ENCODE measurements at regions of chr14 and their contacts with region 1.

Region 1: GRCh38 chr14:68979021-68979782 is at the start of gene ACTN1:
- DNase-seq: peak; percentile 98
- H3K4me3 ChIP-seq: peak within 1 kb of the TSS; percentile 68 to 92 (median 79)
- H3K27ac ChIP-seq: peak within 1 kb of the TSS; percentile 87
- H3K4me1 ChIP-seq: peaks cover 52% of the 10 kb centered on the region
- H3K27me3 ChIP-seq: no peaks in the 10 kb centered on the region
- CTCF ChIP-seq: no peak
- POLR2A ChIP-seq: peak; percentile 88
- total RNA-seq, gene ACTN1: 442 and 443 TPM in 2 replicates

Region 2: GRCh38 chr14:68939893-68940613 is 39.1 kb before region 1 on chr14:
- CTCF ChIA-PET with region 1: interaction called, 5 read pairs
- POLR2A ChIA-PET with region 1: interaction called, 10 read pairs
- dilution Hi-C with region 1: no loop called
- intact Hi-C with region 1: loop called (anchors 1 kb)
- DNase-seq: peak; percentile 98
- H3K4me3 ChIP-seq: no peak overlapping the region
- H3K27ac ChIP-seq: peak overlapping the region; percentile 88
- H3K4me1 ChIP-seq: peaks cover 61% of the 10 kb centered on the region
- H3K27me3 ChIP-seq: no peaks in the 10 kb centered on the region
- CTCF ChIP-seq: no peak
- POLR2A ChIP-seq: peak; percentile 51

Region 3: GRCh38 chr14:68958553-68958952 is 20.6 kb before region 1 on chr14:
- CTCF ChIA-PET with region 1: interaction called, 11 read pairs
- POLR2A ChIA-PET with region 1: interaction called, 5 read pairs
- dilution Hi-C with region 1: no loop called
- intact Hi-C with region 1: no loop called
- DNase-seq: peak; percentile 89
- H3K4me3 ChIP-seq: no peak overlapping the region
- H3K27ac ChIP-seq: peak overlapping the region; percentile 56
- H3K4me1 ChIP-seq: peaks cover 62% of the 10 kb centered on the region
- H3K27me3 ChIP-seq: no peaks in the 10 kb centered on the region
- CTCF ChIP-seq: no peak
- POLR2A ChIP-seq: no peak

Region 4: DNA sequence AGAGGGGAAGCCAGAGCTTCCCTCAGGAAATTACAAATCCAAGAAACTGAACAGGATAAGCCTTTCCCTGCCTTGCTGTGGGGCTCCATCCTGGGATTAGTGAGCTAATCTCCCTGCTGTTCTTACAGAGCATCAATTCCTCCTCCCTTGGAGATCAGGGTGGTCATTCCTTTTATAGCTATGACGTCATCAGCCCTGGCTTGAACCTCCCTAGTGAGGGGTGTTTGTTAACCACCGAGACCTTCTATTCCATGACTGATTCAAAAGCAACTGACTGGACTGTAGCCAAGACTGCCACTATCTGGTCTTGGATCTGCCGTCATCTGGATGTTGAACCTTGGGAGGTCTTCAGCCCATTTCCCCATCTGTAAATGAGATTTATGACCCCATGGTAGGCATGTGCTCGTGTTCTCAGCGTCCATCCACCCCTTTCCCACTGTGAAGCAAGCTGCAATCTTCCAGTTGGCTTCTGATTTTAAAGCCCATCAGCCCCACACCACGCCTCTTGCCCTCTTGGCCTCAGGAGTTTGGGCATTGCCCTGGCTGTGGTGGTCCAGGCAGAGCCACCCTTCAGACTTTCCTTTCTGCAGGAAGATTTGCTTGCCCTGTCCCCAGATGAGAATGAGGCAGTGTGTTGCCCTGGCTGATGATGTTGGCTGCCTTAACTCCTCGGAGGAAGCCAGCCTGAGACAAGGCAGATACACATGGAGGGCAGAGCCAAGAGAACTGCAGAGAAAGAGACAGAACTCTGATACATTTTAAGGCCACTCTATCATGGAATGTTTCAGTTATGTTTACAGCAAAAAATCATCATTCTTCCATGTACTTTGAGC is 59.5 kb after region 1 on chr14:
- CTCF ChIA-PET with region 1: interaction called, 16 read pairs
- POLR2A ChIA-PET with region 1: interaction called, 14 read pairs
- dilution Hi-C with region 1: no loop called
- intact Hi-C with region 1: loop called (anchors 1 kb)
- DNase-seq: peak; percentile 98
- H3K4me3 ChIP-seq: no peak overlapping the region
- H3K27ac ChIP-seq: peak overlapping the region; percentile 93
- H3K4me1 ChIP-seq: peaks cover 60% of the 10 kb centered on the region
- H3K27me3 ChIP-seq: no peaks in the 10 kb centered on the region
- CTCF ChIP-seq: no peak
- POLR2A ChIP-seq: no peak

Region 5: GRCh38 chr14:69055999-69056788 is 77.0 kb after region 1 on chr14:
- CTCF ChIA-PET with region 1: interaction called, 10 read pairs
- POLR2A ChIA-PET with region 1: no interaction called
- dilution Hi-C with region 1: no loop called
- intact Hi-C with region 1: loop called (anchors 1 kb)
- DNase-seq: peak; percentile 53
- H3K4me3 ChIP-seq: no peak overlapping the region
- H3K27ac ChIP-seq: peak overlapping the region; percentile 83
- H3K4me1 ChIP-seq: peaks cover 57% of the 10 kb centered on the region
- H3K27me3 ChIP-seq: no peaks in the 10 kb centered on the region
- CTCF ChIP-seq: peak in 1 of 2 donors; percentile 6
- POLR2A ChIP-seq: no peak

Region 6: DNA sequence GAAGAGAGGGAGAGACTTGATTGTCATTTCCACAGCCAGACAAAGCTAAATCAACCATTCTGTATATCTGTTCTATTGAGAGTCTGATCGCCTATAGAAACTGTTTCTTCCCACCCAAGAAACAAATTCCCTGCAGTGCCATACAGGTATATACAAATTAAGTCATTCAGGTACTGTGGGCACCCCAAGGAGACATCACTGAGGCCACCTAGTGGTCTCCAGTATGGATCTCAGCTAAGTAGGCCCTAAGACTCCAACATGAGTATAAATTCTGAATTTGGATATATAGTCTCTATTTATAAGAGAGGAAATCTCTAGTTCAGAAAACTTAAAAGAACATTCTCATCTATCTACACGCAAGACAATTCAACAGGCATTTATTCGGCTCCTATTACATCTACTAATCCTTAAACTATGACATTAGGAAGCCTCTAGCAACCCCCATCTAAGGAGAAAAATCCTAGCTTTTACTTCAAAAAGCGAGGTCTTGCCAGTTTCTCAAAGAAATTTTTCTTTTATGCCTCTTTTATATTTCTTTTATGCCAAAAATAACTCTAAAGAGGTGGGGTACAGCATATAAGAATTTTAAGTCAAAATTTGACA is 111.1 kb after region 1 on chr14:
- CTCF ChIA-PET with region 1: interaction called, 15 read pairs
- POLR2A ChIA-PET with region 1: no interaction called
- dilution Hi-C with region 1: no loop called
- intact Hi-C with region 1: loop called (anchors 1 kb)
- DNase-seq: peak; percentile 59
- H3K4me3 ChIP-seq: no peak overlapping the region
- H3K27ac ChIP-seq: no peak overlapping the region
- H3K4me1 ChIP-seq: peaks cover 19% of the 10 kb centered on the region
- H3K27me3 ChIP-seq: no peaks in the 10 kb centered on the region
- CTCF ChIP-seq: peak; percentile 57 to 66
- POLR2A ChIP-seq: no peak